WTC11 (cell line): ENCODE measurements at regions of chr10 and their contacts with region 1.

Region 1: DNA sequence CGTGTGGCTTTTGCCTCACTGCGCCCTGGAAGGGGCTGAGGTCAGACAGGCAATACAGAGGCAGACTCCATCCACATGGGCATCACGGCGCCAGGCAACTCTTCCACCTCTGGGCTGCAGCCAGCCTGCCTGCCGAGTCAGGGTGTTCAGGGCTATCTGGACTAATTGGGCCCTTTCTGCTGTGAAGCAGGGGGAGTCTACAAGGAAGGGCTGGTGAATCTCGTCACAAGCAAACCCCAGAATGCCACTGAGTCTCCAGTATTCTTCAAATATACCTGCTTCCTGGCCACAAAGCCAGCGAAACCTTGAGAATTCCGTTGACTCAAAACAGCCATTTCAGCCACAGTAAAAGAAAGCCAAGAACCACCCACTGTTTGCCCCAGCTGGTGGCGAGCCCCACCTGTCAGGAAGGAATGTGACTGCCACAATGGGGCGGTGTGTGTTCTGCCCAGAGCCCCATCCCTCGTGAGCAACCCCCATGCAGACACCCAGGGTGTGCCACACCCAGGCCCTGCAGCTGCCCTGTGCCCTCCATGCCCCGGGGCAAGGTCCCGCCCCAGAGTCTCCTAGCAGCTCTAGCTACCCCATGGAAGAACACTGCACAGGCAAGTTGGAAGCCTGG is 117.3 kb downstream of the FAM53B start:
- DNase-seq: peak; percentile 34
- ATAC-seq: peak; percentile 17
- H3K4me3 Mint-ChIP-seq: no peak overlapping the region
- H3K27ac Mint-ChIP-seq: peak overlapping the region; percentile 91
- H3K4me1 Mint-ChIP-seq: peaks cover 31% of the 10 kb centered on the region
- H3K27me3 Mint-ChIP-seq: no peaks in the 10 kb centered on the region
- CTCF ChIP-seq: no peak

Region 2: DNA sequence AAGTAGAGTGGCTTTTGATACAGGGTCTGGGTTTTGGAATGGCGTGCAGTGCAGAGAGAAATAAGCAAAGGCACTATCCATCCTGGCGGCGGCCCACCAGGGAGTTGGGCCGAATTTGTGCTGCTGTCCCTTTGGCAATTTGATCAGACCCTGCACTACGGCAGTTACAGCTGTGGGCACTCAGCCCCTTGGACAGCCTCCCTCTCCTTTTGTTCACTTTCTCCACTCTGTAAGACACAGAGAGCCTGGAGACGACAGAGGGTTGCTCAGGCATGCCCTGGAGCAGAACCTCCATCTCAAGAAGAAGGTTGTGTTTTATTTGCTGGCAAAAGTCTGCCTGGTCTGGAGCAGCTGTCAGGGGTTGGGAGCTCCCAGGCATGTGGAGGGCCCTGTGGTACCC is 109.4 kb before region 1 on chr10:
- CTCF ChIA-PET with region 1: no interaction called
- POLR2A ChIA-PET with region 1: no interaction called
- DNase-seq: no peak
- ATAC-seq: no peak
- H3K4me3 Mint-ChIP-seq: no peak overlapping the region
- H3K27ac Mint-ChIP-seq: no peak overlapping the region
- H3K4me1 Mint-ChIP-seq: peaks cover 7% of the 10 kb centered on the region
- H3K27me3 Mint-ChIP-seq: no peaks in the 10 kb centered on the region
- CTCF ChIP-seq: no peak

Region 3: DNA sequence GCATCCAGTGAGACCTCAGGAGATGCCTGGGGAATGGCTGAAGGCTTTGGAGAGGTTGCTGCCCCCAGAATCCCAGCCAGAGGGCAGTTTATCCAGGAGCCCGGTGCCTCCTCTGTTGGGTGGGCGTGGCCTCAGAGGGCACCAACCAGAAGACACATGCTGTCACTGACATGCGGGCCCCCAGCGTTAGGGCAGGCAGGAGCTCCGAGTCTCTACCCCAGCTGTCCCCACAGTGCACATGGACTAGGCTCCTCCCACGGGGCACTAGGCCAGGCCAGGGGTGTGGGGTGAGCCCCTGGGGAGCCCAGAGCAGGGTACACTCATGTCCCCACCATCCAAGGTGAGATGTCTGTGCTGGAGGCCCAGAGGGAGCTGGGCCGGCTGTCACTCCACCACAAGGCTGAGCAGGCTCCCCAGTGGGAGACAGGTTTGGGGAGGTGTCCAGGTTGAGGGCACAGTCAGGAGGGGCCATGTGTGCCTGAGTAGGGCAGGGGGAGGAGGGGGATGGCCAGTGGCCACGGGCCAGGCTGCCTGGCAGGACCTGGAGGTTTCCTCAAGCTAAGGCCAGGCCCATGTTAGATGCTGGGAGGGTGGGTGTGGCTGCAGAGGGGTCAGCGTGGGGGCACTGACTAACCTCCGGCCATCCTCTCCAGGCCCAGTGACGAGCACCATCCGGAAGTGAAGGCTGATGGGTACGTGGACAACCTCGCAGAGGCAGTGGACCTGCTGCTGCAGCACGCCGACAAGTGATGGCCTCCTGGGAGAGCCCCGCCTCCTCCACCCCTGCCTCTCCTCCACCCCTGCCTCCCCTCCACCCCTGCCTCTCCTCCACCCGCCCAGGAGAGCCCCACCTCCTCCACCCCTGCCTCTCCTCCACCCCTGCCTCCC is 14.0 kb before region 1 on chr10:
- CTCF ChIA-PET with region 1: interaction called, 16 read pairs
- POLR2A ChIA-PET with region 1: interaction called, 4 read pairs
- DNase-seq: peak; percentile 72
- ATAC-seq: peak; percentile 78
- H3K4me3 Mint-ChIP-seq: no peak overlapping the region
- H3K27ac Mint-ChIP-seq: no peak overlapping the region
- H3K4me1 Mint-ChIP-seq: peaks cover 16% of the 10 kb centered on the region
- H3K27me3 Mint-ChIP-seq: no peaks in the 10 kb centered on the region; the same call in 1 of the 2 replicates
- CTCF ChIP-seq: no peak

Region 4: GRCh38 chr10:124657806-124658205 is 30.9 kb after region 1 on chr10:
- CTCF ChIA-PET with region 1: no interaction called
- POLR2A ChIA-PET with region 1: no interaction called
- DNase-seq: no peak
- ATAC-seq: no peak
- H3K4me3 Mint-ChIP-seq: no peak overlapping the region
- H3K27ac Mint-ChIP-seq: peak overlapping the region; percentile 67
- H3K4me1 Mint-ChIP-seq: peaks cover 15% of the 10 kb centered on the region
- H3K27me3 Mint-ChIP-seq: no peaks in the 10 kb centered on the region
- CTCF ChIP-seq: no peak